OCI-LY7 (cell line): ENCODE measurements at regions of chr4 and their contacts with region 1.

Region 1: GRCh38 chr4:83362492-83363329 is 28.1 kb upstream of the HPSE start:
- DNase-seq: peak; percentile 63
- H3K4me3 ChIP-seq: no peak overlapping the region
- H3K27ac ChIP-seq: no peak overlapping the region
- H3K4me1 ChIP-seq: peaks cover 20% of the 10 kb centered on the region
- CTCF ChIP-seq: peak; percentile 88

Region 2: DNA sequence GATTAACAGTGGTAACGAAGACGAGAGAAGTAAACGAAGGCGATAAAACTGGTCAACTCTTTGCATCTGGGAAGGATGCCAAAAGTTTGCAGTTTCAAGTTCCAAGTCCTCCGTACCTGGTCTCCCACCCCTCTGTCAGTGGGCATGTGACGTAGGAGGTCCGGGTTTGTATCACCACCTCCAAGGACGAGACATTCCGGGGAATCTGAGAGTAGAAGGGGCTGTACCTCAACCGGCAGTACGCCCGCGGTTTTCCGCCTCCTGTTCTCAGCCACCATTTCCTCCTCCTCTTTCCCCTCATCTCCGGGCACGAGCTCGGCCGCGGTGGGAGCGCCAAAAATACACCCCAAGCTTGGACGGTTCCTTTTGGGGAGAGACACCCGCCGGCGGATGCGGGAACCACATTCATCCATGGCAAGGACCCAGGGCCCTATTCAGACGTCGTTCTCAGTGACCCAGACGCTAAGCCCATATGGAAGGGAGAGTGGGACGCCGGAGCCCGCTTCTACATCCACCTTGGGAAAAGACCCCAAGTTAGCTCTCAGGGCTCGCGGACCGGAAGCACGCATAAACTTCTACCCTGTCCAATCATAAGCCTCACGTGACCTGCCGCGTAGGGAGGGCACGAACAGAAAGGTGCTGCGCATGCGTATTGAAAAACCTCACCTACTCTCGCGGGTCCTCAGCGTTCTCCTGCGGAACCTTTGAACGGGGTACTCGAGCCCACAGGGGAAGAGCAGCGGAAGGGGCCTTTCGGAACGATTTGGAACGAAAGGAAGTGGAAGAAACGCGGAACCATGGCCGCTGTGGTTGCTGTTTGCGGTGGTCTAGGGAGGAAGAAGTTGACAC is 92.8 kb after region 1 on chr4 and contains the starts of genes HELQ and MRPS18C:
- CTCF ChIA-PET with region 1: no interaction called
- POLR2A ChIA-PET with region 1: no interaction called
- intact Hi-C with region 1: loop called (anchors 5 kb)
- DNase-seq: peak; percentile 100
- H3K4me3 ChIP-seq: peak within 1 kb of the TSS; percentile 89
- H3K27ac ChIP-seq: peak within 1 kb of the TSS; percentile 62
- H3K4me1 ChIP-seq: peaks cover 37% of the 10 kb centered on the region
- CTCF ChIP-seq: peak; percentile 58
- total RNA-seq, gene HELQ: 63.3 and 67.1 TPM in 2 replicates
- total RNA-seq, gene MRPS18C: 38.1 and 41.4 TPM in 2 replicates

Region 3: DNA sequence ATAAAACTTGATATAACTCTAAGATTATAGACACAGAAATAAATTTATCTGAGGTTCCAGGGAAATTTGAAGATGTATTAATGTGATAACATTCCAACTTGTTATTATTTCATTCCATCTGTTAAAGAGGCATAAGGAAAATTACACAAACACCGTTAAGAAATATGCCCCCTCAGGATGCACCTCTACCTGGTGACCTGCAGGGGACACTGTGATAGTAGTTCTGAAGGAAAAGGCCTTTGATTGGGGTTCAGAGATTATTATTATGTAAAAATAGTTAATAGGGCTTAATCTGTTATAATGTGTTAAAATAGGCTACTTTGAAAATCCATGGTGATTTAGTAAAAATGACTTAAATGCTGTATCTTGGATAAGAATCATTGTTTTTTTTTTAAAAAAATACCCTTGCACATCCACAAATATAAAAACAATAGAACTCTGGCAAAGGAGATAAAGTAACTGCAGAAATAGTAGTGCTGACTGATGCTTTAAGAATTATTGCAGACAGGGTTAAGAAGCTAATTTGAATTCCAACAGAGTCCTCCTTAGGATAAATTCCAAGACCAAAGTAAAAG is 128.3 kb after region 1 on chr4:
- CTCF ChIA-PET with region 1: no interaction called
- POLR2A ChIA-PET with region 1: no interaction called
- intact Hi-C with region 1: loop called (anchors 2 kb)
- DNase-seq: peak; percentile 54
- H3K4me3 ChIP-seq: no peak overlapping the region
- H3K27ac ChIP-seq: no peak overlapping the region
- H3K4me1 ChIP-seq: peaks cover under 1% of the 10 kb centered on the region
- CTCF ChIP-seq: peak; percentile 98

Region 4: GRCh38 chr4:83582289-83582769 is 219.6 kb after region 1 on chr4:
- CTCF ChIA-PET with region 1: no interaction called
- POLR2A ChIA-PET with region 1: interaction called, 5 read pairs
- intact Hi-C with region 1: loop called (anchors 1 kb)
- DNase-seq: peak; percentile 58
- H3K4me3 ChIP-seq: peak overlapping the region; percentile 11
- H3K27ac ChIP-seq: peak overlapping the region; percentile 14
- H3K4me1 ChIP-seq: peaks cover 12% of the 10 kb centered on the region
- CTCF ChIP-seq: peak; percentile 72

Region 5: DNA sequence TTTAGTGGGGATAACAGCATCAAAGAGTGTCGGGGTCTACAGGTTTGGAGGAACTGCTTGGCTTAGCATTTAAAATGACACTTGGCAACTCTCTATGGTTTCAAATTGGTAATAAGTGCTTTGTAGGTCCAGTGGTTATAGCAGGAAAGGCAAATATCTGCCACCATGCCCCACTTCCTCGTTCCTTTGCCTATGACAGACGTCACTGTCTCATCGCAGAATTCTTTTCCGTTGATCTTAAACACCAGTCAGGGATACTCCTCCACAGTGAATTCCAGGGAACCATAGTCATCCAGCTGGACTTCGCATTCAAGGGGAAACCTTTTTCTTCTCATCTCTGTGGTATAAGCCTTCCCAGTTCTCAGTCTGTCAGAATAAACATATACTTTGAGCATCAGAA is 492.3 kb after region 1 on chr4:
- CTCF ChIA-PET with region 1: no interaction called
- POLR2A ChIA-PET with region 1: no interaction called
- intact Hi-C with region 1: no loop called
- DNase-seq: no peak
- H3K4me3 ChIP-seq: no peak overlapping the region
- H3K27ac ChIP-seq: no peak overlapping the region
- H3K4me1 ChIP-seq: no peaks in the 10 kb centered on the region
- CTCF ChIP-seq: no peak